Calu3 (cell line): ENCODE measurements at regions of chr3 and their contacts with region 1.

Region 1: DNA sequence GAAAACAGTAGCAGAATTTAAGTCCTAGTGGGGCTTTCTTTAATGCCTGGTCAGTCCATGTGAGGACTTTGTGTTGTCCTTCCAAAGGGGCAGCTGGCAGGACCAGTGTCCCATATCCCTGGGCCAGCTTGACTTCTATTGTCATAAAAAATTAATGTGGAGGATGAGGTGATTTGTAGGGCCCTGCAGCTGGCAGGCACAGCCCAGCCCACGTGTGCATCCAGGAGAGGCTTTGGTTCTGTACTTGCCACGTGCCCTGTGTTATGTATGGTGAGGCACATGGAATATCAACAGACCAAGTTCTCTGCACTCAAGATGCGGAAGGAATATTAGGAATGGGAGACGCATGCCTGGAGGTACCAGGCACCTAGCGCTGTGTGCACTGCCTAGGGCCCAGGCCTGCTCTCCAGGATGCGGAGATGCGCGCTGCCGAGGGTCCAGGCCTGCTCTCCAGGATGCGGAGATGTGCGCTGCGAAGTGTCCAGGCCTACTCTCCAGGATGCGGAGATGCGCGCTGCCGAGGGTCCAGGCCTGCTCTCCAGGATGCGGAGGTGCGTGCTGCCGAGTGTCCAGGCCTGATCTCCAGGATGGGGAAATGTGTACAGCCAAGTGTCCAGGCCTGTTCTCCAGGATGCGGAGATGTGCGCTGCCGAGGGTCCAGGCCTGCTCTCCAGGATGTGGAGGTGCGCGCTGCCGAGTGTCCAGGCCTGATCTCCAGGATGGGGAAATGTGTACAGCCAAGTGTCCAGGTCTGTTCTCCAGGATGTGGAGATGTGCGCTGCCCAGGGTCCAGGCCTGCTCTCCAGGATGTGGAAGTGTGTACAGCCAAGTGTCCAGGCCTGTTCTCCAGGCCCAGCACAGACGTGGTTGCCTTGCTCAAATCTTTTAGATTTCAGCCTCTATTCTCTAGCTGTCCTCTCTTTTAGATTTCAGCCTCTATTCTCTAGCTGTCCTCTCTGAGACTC is 183.3 kb upstream of the ROPN1 start:
- DNase-seq: no peak
- H3K4me3 Mint-ChIP-seq: no peak overlapping the region
- H3K27ac Mint-ChIP-seq: no peak overlapping the region
- H3K4me1 Mint-ChIP-seq: peaks cover 28% of the 10 kb centered on the region
- H3K27me3 Mint-ChIP-seq: no peaks in the 10 kb centered on the region
- CTCF ChIP-seq: no peak

Region 2: GRCh38 chr3:124088801-124089200 is 86.4 kb before region 1 on chr3:
- CTCF ChIA-PET with region 1: no interaction called
- intact Hi-C with region 1: loop called (anchors 5 kb)
- DNase-seq: no peak
- H3K4me3 Mint-ChIP-seq: no peak overlapping the region
- H3K27ac Mint-ChIP-seq: no peak overlapping the region
- H3K4me1 Mint-ChIP-seq: no peaks in the 10 kb centered on the region
- H3K27me3 Mint-ChIP-seq: peaks cover 100% of the 10 kb centered on the region
- CTCF ChIP-seq: no peak